Kidney (tissue), 22 donors: ENCODE measurements at regions of chr3 and their contacts with region 1.

Region 1: GRCh38 chr3:192816351-192816750 is 89.0 kb upstream of the FGF12 start:
- DNase-seq: peak in 2 of 5 donors; percentile 76 to 80
- H3K4me3 ChIP-seq: no peak overlapping the region
- H3K27ac ChIP-seq: no peak overlapping the region
- H3K4me1 ChIP-seq: peaks cover 0 to 6% (median 6%) of the 10 kb centered on the region in 3 donors
- H3K27me3 ChIP-seq: no peaks in the 10 kb centered on the region
- CTCF ChIP-seq: peak; percentile 66

Region 2: GRCh38 chr3:193030276-193030675 is 213.9 kb after region 1 on chr3:
- intact Hi-C with region 1: loop called (anchors 10 kb)
- DNase-seq: no peak
- H3K4me3 ChIP-seq: no peak overlapping the region
- H3K27ac ChIP-seq: no peak overlapping the region
- H3K4me1 ChIP-seq: no peaks in the 10 kb centered on the region
- H3K27me3 ChIP-seq: no peaks in the 10 kb centered on the region
- CTCF ChIP-seq: no peak

Region 3: GRCh38 chr3:193572426-193572908 is 756.1 kb after region 1 on chr3:
- intact Hi-C with region 1: loop called (anchors 10 kb)
- DNase-seq: peak in 4 of 5 donors; percentile 64 to 83 (median 78)
- H3K4me3 ChIP-seq: no peak overlapping the region
- H3K27ac ChIP-seq: no peak overlapping the region
- H3K4me1 ChIP-seq: no peaks in the 10 kb centered on the region
- H3K27me3 ChIP-seq: no peaks in the 10 kb centered on the region
- CTCF ChIP-seq: peak; percentile 86